ENCODE measurements at regions of chr9 and their contacts with region 1.

Region 1: GRCh38 chr9:90914868-90915483 is 113.4 kb downstream of the SYK start:
- DNase-seq: peak; percentile 65 to 73
- ATAC-seq: peak; percentile 98

Region 2: GRCh38 chr9:90801583-90802289 is 113.2 kb before region 1 on chr9 and contains the start of gene SYK:
- intact Hi-C with region 1: no loop called
- DNase-seq: peak; percentile 76 to 85
- ATAC-seq: peak; percentile 94
- total RNA-seq, gene SYK: 45.1 to 59.7 TPM

Region 3: GRCh38 chr9:91424403-91425176 is 509.6 kb after region 1 on chr9:
- intact Hi-C with region 1: loop called in 1 of 2 experiments (anchors 5 kb)
- DNase-seq: peak; percentile 81 to 88
- ATAC-seq: peak; percentile 53

Region 4: GRCh38 chr9:91676046-91676445 is 761.1 kb after region 1 on chr9:
- intact Hi-C with region 1: loop called in 1 of 2 experiments (anchors 10 kb)
- DNase-seq: peak in 1 of 2 donors; percentile 13
- ATAC-seq: peak; percentile 73